ENCODE measurements at regions of chr14 and their contacts with region 1.

Region 1: GRCh38 chr14:24058260-24058950 is 6.6 kb downstream of the CARMIL3 start:
- DNase-seq: peak in 4 of 5 donors; percentile 63 to 85 (median 74)
- H3K4me3 ChIP-seq: no peak overlapping the region
- H3K27ac ChIP-seq: no peak overlapping the region
- H3K4me1 ChIP-seq: no peaks in the 10 kb centered on the region
- H3K27me3 ChIP-seq: no peaks in the 10 kb centered on the region
- CTCF ChIP-seq: peak; percentile 65 to 85 (median 80)
- EP300 ChIP-seq: no peak
- POLR2A ChIP-seq: no peak

Region 2: GRCh38 chr14:24108336-24108874 is 50.0 kb after region 1 on chr14:
- intact Hi-C with region 1: loop called in 3 of 4 experiments (anchors 5 to 10 kb)
- DNase-seq: peak in 1 of 5 donors; percentile 7
- H3K4me3 ChIP-seq: no peak overlapping the region
- H3K27ac ChIP-seq: no peak overlapping the region
- H3K4me1 ChIP-seq: no peaks in the 10 kb centered on the region
- H3K27me3 ChIP-seq: no peaks in the 10 kb centered on the region
- CTCF ChIP-seq: no peak
- EP300 ChIP-seq: no peak
- POLR2A ChIP-seq: no peak

Region 3: DNA sequence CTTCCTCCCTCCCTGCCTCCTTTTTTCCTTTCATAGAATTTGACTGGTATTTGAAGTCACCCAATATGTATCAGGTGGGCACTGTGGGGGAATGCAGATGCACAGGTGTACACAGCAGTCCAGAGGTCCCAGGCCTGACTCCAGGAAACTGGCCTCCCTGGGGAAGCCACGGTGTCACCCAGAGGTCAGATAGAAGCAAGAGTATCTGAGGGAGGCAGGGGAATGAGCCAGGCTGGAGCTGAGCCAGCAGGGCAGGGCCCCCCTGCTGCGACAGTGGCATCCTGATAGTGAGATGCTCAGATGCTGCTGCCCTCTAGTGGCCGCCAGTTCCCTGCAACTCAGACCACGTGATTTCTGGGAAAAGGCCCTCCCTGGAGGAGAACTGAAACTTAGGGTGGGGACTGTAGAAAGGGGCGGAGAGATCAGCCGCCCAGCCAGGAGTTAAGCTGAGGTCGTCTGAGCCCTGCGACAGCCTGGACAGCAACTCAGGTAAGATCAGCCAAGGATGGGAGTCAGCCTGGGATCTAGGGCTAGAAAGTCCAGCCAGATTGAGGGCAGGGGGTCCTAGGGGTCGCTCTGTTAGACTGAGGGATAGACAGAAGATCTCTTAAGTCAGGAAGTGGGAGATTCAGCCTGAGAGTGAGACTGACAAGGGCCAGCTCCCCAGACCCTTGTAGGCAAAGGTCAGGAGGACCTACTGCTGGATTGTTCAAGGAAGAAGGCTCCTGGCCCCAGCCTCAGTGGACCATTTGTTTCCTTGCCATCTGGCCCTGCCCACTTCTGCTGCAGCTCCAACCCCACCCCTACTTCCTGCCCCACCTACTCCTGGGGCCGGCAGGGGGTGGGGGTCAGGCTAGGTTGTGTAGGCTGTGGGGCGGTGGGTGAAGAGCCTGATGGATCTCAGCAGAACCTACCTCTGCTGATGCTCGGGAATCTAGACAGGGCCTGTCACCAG is 102.7 kb after region 1 on chr14 and contains the start of gene IRF9:
- intact Hi-C with region 1: loop called in 1 of 4 experiments (anchors 5 kb)
- DNase-seq: peak; percentile 93 to 96 (median 96)
- H3K4me3 ChIP-seq: peak within 1 kb of the TSS; percentile 84
- H3K27ac ChIP-seq: peak within 1 kb of the TSS; percentile 71 to 84
- H3K4me1 ChIP-seq: peaks cover 8% of the 10 kb centered on the region
- H3K27me3 ChIP-seq: no peaks in the 10 kb centered on the region
- CTCF ChIP-seq: peak; percentile 96 to 99 (median 97)
- EP300 ChIP-seq: peak; percentile 73
- POLR2A ChIP-seq: peak; percentile 51
- total RNA-seq, gene IRF9: 31.6 to 151 (median 72.7) TPM